H1 (cell line): ENCODE measurements at regions of chr22 and their contacts with region 1.

Region 1: GRCh38 chr22:37544955-37545699 is 15.2 kb upstream of the CDC42EP1 start:
- DNase-seq: peak; percentile 61 to 95
- H3K4me3 ChIP-seq: peak overlapping the region in 3 of 4 experiments; percentile 15 to 57 (median 24); a peak in 4 of 8 replicates
- H3K27ac ChIP-seq: peak overlapping the region; percentile 49; the same call in 1 of the 2 replicates
- H3K4me1 ChIP-seq: peaks cover 5 to 17% (median 11%) of the 10 kb centered on the region in 4 experiments
- H3K27me3 ChIP-seq: no peaks in the 10 kb centered on the region; a peak in 1 of 7 replicates
- CTCF ChIP-seq: peak; percentile 86 to 96 (median 89)
- EP300 ChIP-seq: no peak
- POLR2A ChIP-seq: no peak
- RAD21 ChIP-seq: peak; percentile 90 to 91

Region 2: DNA sequence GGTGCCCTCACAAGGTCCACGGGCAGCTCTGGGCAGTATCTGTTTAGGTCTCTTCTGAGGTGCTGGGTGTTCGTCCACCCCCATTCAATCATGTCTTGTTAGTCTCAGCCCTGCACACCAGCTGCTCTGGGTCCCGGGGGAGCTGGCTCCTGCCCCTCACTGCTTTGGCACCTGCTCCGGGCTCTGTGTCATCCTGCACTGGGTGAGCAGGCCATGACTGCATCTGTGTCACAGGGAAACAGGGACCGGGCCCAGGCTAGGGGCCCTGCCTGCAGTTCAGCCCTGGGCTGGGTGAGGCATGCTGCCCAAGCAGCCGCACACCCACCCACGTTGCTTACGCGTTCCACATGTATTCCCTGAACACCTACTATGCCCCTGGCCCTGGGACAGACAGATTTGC is 161.8 kb before region 1 on chr22:
- CTCF ChIA-PET with region 1: no interaction called
- POLR2A ChIA-PET with region 1: no interaction called
- DNase-seq: no peak
- H3K4me3 ChIP-seq: no peak overlapping the region
- H3K27ac ChIP-seq: peak overlapping the region; percentile 42; the same call in 1 of the 2 replicates
- H3K4me1 ChIP-seq: peaks cover 0 to 6% (median 1%) of the 10 kb centered on the region in 4 experiments; a peak in 4 of 7 replicates
- H3K27me3 ChIP-seq: no peaks in the 10 kb centered on the region
- CTCF ChIP-seq: no peak
- EP300 ChIP-seq: no peak
- POLR2A ChIP-seq: no peak
- RAD21 ChIP-seq: no peak

Region 3: GRCh38 chr22:37601540-37602442 is 56.7 kb after region 1 on chr22:
- CTCF ChIA-PET with region 1: interaction called, 30 read pairs
- POLR2A ChIA-PET with region 1: interaction called, 3 read pairs
- DNase-seq: peak; percentile 65 to 66
- H3K4me3 ChIP-seq: peak overlapping the region in 2 of 4 experiments; percentile 9 to 26; a peak in 3 of 8 replicates
- H3K27ac ChIP-seq: 0 out of 2 replicates have a peak overlapping the region, but pooled peaks have one; percentile 4
- H3K4me1 ChIP-seq: peaks cover 0 to 8% (median 4%) of the 10 kb centered on the region in 4 experiments; a peak in 3 of 7 replicates
- H3K27me3 ChIP-seq: no peaks in the 10 kb centered on the region
- CTCF ChIP-seq: no peak
- EP300 ChIP-seq: no peak
- POLR2A ChIP-seq: no peak
- RAD21 ChIP-seq: no peak